ENCODE measurements at regions of chr22 and their contacts with region 1.

Region 1: GRCh38 chr22:17171313-17172171 is 12.5 kb upstream of the HDHD5 start:
- H3K4me3 ChIP-seq: peak overlapping the region; percentile 78
- H3K27ac ChIP-seq: peak overlapping the region; percentile 83
- H3K4me1 ChIP-seq: 0 out of 2 replicates have a peak, but pooled peaks cover 4% of the 10 kb centered on the region
- CTCF ChIP-seq: peak; percentile 90

Region 2: DNA sequence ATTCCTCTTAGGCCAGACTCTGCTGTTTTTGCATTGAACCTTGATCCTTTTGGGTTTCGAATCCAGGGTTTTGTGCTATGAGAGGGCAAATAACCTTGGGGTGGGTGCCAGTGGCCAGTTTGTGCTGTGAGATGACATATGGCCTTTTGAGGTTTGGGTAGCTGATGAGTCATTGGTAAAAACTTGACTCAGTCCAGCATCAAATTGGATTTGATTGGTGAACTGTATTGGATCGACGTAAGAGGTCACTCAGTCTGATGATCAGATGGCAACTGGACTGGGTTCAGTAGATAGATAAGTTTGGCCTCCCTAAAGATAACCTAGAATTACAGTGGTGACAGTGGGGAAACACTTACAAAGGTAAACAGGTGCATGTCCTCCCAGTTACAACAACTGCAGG is 305.4 kb before region 1 on chr22:
- CTCF ChIA-PET with region 1: no interaction called
- POLR2A ChIA-PET with region 1: no interaction called
- H3K4me3 ChIP-seq: no peak overlapping the region
- H3K27ac ChIP-seq: no peak overlapping the region
- H3K4me1 ChIP-seq: no peaks in the 10 kb centered on the region
- CTCF ChIP-seq: no peak

Region 3: GRCh38 chr22:17009640-17010291 is 161.8 kb before region 1 on chr22:
- CTCF ChIA-PET with region 1: no interaction called
- POLR2A ChIA-PET with region 1: no interaction called
- H3K4me3 ChIP-seq: no peak overlapping the region
- H3K27ac ChIP-seq: no peak overlapping the region
- H3K4me1 ChIP-seq: no peaks in the 10 kb centered on the region
- CTCF ChIP-seq: no peak

Region 4: DNA sequence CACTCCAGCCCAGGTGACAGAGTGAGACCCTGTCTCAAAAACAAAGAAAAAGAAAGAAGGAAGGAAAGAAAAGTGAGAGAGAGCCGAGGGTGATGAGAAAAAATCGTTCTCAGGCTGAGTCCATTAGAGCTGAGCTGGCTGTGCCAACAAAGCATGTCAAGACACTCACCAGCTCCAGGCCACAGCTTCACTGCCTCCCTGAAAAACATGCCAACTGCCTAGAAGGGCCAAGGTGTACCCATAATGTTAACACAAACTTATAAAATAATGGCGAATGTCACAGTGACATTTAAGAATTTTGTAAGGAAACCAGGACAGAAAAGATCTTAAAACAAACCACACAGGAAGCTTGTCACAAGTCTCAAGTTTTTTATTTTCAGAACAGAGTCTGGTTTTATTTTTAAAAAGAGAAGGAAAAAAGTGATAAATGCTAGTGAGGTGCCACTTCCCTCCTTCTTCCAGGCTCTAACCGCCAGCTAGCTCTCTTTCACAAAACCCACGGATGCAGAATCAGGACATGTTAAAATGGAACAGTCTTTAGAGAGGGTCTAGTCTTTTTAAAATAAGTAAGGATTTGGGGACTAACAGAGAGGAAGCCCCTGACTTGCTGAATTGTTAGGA is 55.5 kb before region 1 on chr22:
- CTCF ChIA-PET with region 1: interaction called, 14 read pairs
- POLR2A ChIA-PET with region 1: interaction called, 6 read pairs
- H3K4me3 ChIP-seq: no peak overlapping the region
- H3K27ac ChIP-seq: no peak overlapping the region
- H3K4me1 ChIP-seq: no peaks in the 10 kb centered on the region
- CTCF ChIP-seq: no peak

Region 5: GRCh38 chr22:17158568-17159503 is 12.7 kb before region 1 on chr22 and contains the start of gene HDHD5:
- CTCF ChIA-PET with region 1: interaction called, 87 read pairs
- POLR2A ChIA-PET with region 1: interaction called, 35 read pairs
- H3K4me3 ChIP-seq: peak within 1 kb of the TSS; percentile 73
- H3K27ac ChIP-seq: peak within 1 kb of the TSS; percentile 76
- H3K4me1 ChIP-seq: peaks cover 7% of the 10 kb centered on the region
- CTCF ChIP-seq: peak; percentile 47; the same call in 1 of the 2 replicates

Region 6: DNA sequence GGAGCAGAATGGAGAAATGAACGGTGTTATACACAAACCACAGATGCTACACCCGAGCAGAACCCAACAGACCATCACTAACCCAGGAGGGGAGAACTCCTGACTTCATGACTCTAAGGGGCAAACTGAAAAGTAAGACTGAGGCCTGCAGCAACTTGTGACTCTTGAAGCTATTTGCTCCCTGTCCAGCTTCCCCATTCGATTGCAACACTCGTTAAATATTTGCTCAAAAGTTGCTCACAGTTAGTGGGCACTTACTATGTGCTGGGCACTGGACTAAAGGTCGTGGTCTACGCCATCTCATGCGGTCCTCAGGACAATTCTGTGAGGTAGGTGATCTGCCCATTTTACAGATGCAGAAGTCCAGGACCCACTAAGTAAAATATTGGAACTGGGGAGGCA is 57.2 kb after region 1 on chr22:
- CTCF ChIA-PET with region 1: interaction called, 11 read pairs
- POLR2A ChIA-PET with region 1: no interaction called
- H3K4me3 ChIP-seq: no peak overlapping the region
- H3K27ac ChIP-seq: no peak overlapping the region
- H3K4me1 ChIP-seq: no peaks in the 10 kb centered on the region
- CTCF ChIP-seq: no peak

Region 7: DNA sequence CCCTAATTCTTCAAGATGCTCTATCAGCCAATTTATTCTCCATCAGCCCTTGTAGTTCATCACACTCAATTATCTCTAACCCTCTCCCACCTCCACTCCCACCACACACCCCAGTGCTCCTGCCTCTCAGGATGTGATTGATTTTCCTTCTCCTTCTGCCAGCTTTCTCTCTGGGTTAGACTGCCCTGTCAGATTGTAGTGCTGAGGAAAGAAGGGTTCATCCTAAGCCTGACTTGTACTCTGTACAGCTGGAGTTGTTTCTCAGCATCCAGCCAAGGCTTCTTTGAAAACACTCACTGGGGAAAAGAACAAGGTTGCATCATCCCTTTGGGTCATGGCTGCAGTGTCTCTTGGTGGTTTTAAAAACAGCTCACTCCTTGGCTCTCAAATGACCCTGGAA is 258.9 kb after region 1 on chr22:
- CTCF ChIA-PET with region 1: interaction called, 11 read pairs
- POLR2A ChIA-PET with region 1: no interaction called
- H3K4me3 ChIP-seq: no peak overlapping the region
- H3K27ac ChIP-seq: no peak overlapping the region
- H3K4me1 ChIP-seq: peaks cover 4% of the 10 kb centered on the region; the same call in 1 of the 2 replicates
- CTCF ChIP-seq: no peak

Region 8: GRCh38 chr22:17514084-17514483 is 342.5 kb after region 1 on chr22:
- CTCF ChIA-PET with region 1: interaction called, 13 read pairs
- POLR2A ChIA-PET with region 1: interaction called, 3 read pairs
- H3K4me3 ChIP-seq: no peak overlapping the region
- H3K27ac ChIP-seq: no peak overlapping the region
- H3K4me1 ChIP-seq: no peaks in the 10 kb centered on the region
- CTCF ChIP-seq: no peak

Region 9: GRCh38 chr22:17808693-17809403 is 637.3 kb after region 1 on chr22:
- CTCF ChIA-PET with region 1: no interaction called
- POLR2A ChIA-PET with region 1: no interaction called
- H3K4me3 ChIP-seq: no peak overlapping the region
- H3K27ac ChIP-seq: no peak overlapping the region
- H3K4me1 ChIP-seq: no peaks in the 10 kb centered on the region
- CTCF ChIP-seq: no peak